Calu3 (cell line): ENCODE measurements at regions of chr7 and their contacts with region 1.

Region 1: DNA sequence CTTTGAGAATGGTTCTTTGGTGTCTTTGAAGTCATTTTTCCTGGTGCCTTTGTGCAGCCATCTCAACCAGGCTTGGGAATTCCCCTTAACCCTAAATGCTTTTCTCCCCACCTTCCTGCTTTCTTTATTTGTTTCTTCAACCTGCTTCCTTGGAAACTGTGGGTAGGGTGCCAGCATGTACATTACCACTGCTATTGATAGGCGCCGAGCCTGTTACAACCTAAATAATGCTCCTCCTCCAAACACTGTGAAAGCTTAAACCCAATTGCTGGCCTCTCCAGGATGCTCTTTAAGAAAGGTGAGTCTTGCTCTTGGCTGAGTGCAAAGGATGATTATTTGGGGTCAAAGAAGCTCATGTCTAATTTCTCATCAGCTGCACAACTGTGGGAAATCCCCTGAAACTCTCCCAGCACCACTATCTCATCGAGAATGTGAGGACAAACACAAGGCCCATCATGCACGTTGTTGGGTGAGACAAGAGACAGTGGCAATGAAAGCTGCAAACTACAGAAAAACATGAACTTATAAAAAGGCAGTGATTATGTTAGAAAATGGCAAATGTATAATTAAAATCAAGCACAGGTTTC is 285.5 kb upstream of the IGFBP3 start:
- DNase-seq: peak; percentile 80
- H3K4me3 Mint-ChIP-seq: peak overlapping the region; percentile 19
- H3K27ac Mint-ChIP-seq: peak overlapping the region; percentile 97
- H3K4me1 Mint-ChIP-seq: peaks cover 70% of the 10 kb centered on the region
- H3K27me3 Mint-ChIP-seq: no peaks in the 10 kb centered on the region
- CTCF ChIP-seq: no peak

Region 2: GRCh38 chr7:45978010-45978681 is 228.4 kb before region 1 on chr7:
- CTCF ChIA-PET with region 1: interaction called, 3 read pairs
- intact Hi-C with region 1: loop called (anchors 1 kb)
- DNase-seq: peak; percentile 89
- H3K4me3 Mint-ChIP-seq: peak overlapping the region; percentile 37
- H3K27ac Mint-ChIP-seq: peak overlapping the region; percentile 99
- H3K4me1 Mint-ChIP-seq: peaks cover 73% of the 10 kb centered on the region
- H3K27me3 Mint-ChIP-seq: no peaks in the 10 kb centered on the region
- CTCF ChIP-seq: no peak

Region 3: GRCh38 chr7:46003896-46004875 is 202.4 kb before region 1 on chr7:
- CTCF ChIA-PET with region 1: no interaction called
- intact Hi-C with region 1: loop called (anchors 10 kb)
- DNase-seq: peak; percentile 76
- H3K4me3 Mint-ChIP-seq: peak overlapping the region; percentile 0
- H3K27ac Mint-ChIP-seq: peak overlapping the region; percentile 60
- H3K4me1 Mint-ChIP-seq: peaks cover 33% of the 10 kb centered on the region
- H3K27me3 Mint-ChIP-seq: no peaks in the 10 kb centered on the region
- CTCF ChIP-seq: no peak

Region 4: DNA sequence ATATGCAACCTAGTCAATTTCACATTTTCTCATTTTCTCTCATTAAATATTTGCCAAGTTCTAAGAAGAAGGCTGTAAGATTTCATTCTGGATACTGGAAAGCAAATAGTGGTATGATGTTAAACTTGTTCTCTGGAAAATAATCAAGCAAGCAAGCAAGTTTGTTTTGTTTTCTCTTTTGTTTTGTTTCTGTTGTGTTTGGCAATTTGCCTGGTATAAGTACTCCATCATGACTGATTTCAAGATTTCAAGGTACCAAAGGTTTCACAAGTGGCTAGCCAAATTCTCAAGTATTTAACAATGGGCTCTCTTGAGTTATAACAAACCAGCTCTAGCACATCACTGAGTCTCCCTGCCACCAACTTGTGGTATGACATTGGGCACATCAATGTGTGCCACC is 133.9 kb before region 1 on chr7:
- CTCF ChIA-PET with region 1: no interaction called
- intact Hi-C with region 1: no loop called
- DNase-seq: no peak
- H3K4me3 Mint-ChIP-seq: no peak overlapping the region
- H3K27ac Mint-ChIP-seq: no peak overlapping the region
- H3K4me1 Mint-ChIP-seq: peaks cover 19% of the 10 kb centered on the region
- H3K27me3 Mint-ChIP-seq: no peaks in the 10 kb centered on the region
- CTCF ChIP-seq: no peak

Region 5: GRCh38 chr7:46153951-46154787 is 52.4 kb before region 1 on chr7:
- CTCF ChIA-PET with region 1: no interaction called
- intact Hi-C with region 1: loop called (anchors 5 kb)
- DNase-seq: peak; percentile 51
- H3K4me3 Mint-ChIP-seq: no peak overlapping the region
- H3K27ac Mint-ChIP-seq: peak overlapping the region; percentile 65
- H3K4me1 Mint-ChIP-seq: peaks cover 28% of the 10 kb centered on the region
- H3K27me3 Mint-ChIP-seq: no peaks in the 10 kb centered on the region
- CTCF ChIP-seq: no peak